Activated B cell treated with CpG ODN at 0.5 μM for 24 hours (primary cell): ENCODE measurements at regions of chr14 and their contacts with region 1.

Region 1: DNA sequence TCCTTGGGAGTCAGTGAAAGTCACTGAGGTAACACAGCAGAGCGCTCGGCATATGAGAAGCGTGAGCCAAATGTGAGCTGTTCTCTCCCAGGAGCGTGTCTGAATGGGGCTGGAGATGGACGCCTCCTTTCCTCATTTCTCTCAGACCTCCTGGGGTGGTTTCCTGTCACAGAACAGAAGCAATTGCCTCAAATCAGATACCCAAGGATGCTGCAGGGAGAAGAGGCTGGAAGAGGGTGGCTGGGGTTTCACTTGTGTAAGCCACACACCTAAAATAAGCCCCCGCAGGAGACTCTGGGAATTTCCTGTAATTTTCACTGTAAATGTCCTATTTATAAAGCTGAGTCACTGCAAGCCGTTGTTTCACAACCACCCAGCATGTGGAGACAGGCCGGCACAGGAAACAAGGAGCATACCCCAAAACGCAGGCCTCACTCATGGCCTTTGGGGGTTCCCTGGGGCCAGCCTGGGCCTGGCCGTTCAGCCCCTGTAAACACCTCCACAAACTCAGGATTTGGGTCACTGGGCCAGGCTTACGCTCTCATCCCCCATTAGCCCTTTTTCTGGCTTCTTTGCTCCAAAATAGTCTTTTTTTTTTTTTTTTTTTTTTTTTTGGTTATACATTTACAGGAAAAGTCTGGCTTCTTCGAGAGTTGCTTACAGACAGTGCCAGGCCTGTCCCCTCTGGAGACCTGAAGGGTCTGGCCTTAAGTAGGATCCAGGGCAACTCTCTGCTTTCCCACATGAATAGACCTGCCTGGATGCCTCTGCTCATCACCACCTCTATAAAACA is 55.3 kb downstream of the VCPKMT start:
- DNase-seq: no peak
- ATAC-seq: peak; percentile 0
- H3K4me3 Mint-ChIP-seq: peak overlapping the region; percentile 87
- H3K27ac Mint-ChIP-seq: peak overlapping the region; percentile 100
- H3K4me1 Mint-ChIP-seq: peaks cover 88% of the 10 kb centered on the region
- H3K27me3 Mint-ChIP-seq: no peaks in the 10 kb centered on the region
- CTCF ChIP-seq: no peak

Region 2: DNA sequence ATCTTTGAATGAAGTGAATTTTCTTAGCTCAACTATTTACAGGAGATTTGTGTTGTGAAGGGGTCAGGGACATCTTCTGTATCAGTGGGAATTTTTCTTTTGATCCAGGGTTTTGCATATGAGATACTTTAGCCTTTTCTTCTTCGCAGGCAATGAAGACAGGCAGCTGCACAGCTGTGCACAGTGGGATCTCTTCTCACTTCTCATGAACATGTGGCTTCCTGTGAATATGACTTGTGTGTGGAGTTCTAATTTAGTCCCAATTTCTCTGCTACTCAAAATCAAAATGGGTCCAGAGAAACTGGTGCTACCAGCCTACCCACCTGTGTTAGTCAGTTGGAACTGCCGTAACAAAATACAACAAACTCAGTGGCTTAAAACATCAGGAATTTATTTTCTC is 130.3 kb before region 1 on chr14:
- CTCF ChIA-PET with region 1: no interaction called
- POLR2A ChIA-PET with region 1: interaction called, 7 read pairs
- intact Hi-C with region 1: loop called (anchors 1 kb)
- DNase-seq: no peak
- ATAC-seq: no peak
- H3K4me3 Mint-ChIP-seq: peak overlapping the region; percentile 40
- H3K27ac Mint-ChIP-seq: peak overlapping the region; percentile 88
- H3K4me1 Mint-ChIP-seq: peaks cover 34% of the 10 kb centered on the region
- H3K27me3 Mint-ChIP-seq: no peaks in the 10 kb centered on the region
- CTCF ChIP-seq: no peak

Region 3: GRCh38 chr14:49977126-49977841 is 83.8 kb before region 1 on chr14:
- CTCF ChIA-PET with region 1: interaction called, 13 read pairs
- POLR2A ChIA-PET with region 1: interaction called, 52 read pairs
- intact Hi-C with region 1: no loop called
- DNase-seq: no peak
- ATAC-seq: peak; percentile 87
- H3K4me3 Mint-ChIP-seq: peak overlapping the region; percentile 76
- H3K27ac Mint-ChIP-seq: peak overlapping the region; percentile 95
- H3K4me1 Mint-ChIP-seq: peaks cover 88% of the 10 kb centered on the region
- H3K27me3 Mint-ChIP-seq: no peaks in the 10 kb centered on the region
- CTCF ChIP-seq: no peak

Region 4: GRCh38 chr14:50045039-50045711 is 15.9 kb before region 1 on chr14:
- CTCF ChIA-PET with region 1: interaction called, 8 read pairs
- POLR2A ChIA-PET with region 1: interaction called, 96 read pairs
- intact Hi-C with region 1: loop called (anchors 1 kb)
- DNase-seq: no peak
- ATAC-seq: peak; percentile 70
- H3K4me3 Mint-ChIP-seq: peak overlapping the region; percentile 2
- H3K27ac Mint-ChIP-seq: peak overlapping the region; percentile 92
- H3K4me1 Mint-ChIP-seq: peaks cover 71% of the 10 kb centered on the region
- H3K27me3 Mint-ChIP-seq: no peaks in the 10 kb centered on the region
- CTCF ChIP-seq: no peak

Region 5: DNA sequence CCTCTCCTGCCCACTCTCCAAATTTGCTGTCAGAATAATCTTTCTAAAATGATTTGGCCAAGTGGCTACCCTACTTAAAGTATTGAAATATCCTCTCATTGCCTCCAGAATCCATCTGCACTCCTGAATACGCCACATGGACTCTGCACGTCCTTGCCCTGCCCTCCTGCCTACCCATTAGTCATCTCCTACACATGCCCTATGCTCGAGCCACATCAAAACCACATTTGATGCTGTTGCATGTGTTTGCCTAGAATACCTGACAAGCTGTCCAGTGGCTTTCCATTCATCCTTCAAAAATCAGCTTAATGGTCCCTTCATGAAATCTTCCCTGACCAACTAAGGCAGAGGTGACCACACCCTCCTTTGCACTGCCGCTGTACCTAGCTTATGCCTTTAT is 38.3 kb after region 1 on chr14:
- CTCF ChIA-PET with region 1: interaction called, 32 read pairs
- POLR2A ChIA-PET with region 1: interaction called, 397 read pairs
- intact Hi-C with region 1: loop called (anchors 1 kb)
- DNase-seq: no peak
- ATAC-seq: no peak
- H3K4me3 Mint-ChIP-seq: no peak overlapping the region
- H3K27ac Mint-ChIP-seq: peak overlapping the region; percentile 62
- H3K4me1 Mint-ChIP-seq: peaks cover 74% of the 10 kb centered on the region
- H3K27me3 Mint-ChIP-seq: no peaks in the 10 kb centered on the region
- CTCF ChIP-seq: no peak